ENCODE measurements at regions of chr12 and their contacts with region 1.

Region 1: DNA sequence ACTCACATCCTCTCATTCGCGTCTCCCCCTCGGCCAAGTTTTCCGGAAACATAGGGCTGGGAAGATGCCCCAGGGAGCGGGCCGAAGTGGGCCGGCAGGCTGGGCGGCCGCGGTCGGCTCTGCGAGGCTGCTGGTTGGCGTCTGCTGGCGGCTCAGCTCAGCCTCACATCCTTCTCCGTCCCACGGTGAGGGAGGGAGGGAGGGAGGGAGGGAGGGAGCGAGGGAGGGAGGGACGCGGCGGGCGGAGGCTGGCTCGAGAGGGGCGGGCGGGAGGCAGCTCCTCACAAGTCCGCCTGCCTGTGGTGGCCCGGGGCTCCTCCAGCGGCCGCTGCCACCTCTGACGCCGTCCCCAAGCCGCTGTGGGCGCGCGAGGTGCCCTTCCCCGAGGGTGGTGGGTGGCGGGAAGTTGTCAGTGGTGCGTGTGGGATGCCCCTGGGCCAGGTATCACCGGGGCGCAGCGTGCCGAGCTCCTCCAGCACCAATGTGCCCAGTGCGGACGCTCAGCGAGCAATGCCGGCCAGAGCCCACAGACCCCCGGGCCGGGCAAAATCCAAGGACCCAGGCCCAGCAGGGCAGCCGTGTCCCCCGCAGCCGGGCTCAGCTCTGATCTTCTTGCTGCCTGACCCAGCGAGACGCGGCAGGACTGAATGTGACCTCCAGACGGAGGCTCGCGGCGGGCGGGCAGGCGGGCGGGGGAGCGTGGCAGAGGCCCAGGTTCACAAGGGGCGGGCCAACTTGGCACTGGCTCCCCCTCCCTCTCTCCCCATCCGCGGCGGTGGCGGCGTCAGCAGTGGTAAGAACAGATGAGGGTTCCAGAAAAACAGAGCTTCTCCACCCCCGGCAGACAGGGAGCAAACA is 94.0 kb downstream of the RFLNA start:
- DNase-seq: peak; percentile 67 to 88
- H3K4me3 ChIP-seq: peak overlapping the region; percentile 98
- H3K27ac ChIP-seq: peak overlapping the region; percentile 96
- H3K4me1 ChIP-seq: peaks cover 67% of the 10 kb centered on the region
- H3K27me3 ChIP-seq: no peaks in the 10 kb centered on the region
- CTCF ChIP-seq: no peak; the same call in 1 of the 2 replicates

Region 2: GRCh38 chr12:124359671-124360581 is 29.0 kb before region 1 on chr12:
- CTCF ChIA-PET with region 1: no interaction called
- POLR2A ChIA-PET with region 1: no interaction called
- intact Hi-C with region 1: loop called (anchors 5 kb)
- DNase-seq: peak in 1 of 2 experiments; percentile 87
- H3K4me3 ChIP-seq: no peak overlapping the region
- H3K27ac ChIP-seq: no peak overlapping the region
- H3K4me1 ChIP-seq: no peaks in the 10 kb centered on the region
- H3K27me3 ChIP-seq: no peaks in the 10 kb centered on the region
- CTCF ChIP-seq: no peak

Region 3: DNA sequence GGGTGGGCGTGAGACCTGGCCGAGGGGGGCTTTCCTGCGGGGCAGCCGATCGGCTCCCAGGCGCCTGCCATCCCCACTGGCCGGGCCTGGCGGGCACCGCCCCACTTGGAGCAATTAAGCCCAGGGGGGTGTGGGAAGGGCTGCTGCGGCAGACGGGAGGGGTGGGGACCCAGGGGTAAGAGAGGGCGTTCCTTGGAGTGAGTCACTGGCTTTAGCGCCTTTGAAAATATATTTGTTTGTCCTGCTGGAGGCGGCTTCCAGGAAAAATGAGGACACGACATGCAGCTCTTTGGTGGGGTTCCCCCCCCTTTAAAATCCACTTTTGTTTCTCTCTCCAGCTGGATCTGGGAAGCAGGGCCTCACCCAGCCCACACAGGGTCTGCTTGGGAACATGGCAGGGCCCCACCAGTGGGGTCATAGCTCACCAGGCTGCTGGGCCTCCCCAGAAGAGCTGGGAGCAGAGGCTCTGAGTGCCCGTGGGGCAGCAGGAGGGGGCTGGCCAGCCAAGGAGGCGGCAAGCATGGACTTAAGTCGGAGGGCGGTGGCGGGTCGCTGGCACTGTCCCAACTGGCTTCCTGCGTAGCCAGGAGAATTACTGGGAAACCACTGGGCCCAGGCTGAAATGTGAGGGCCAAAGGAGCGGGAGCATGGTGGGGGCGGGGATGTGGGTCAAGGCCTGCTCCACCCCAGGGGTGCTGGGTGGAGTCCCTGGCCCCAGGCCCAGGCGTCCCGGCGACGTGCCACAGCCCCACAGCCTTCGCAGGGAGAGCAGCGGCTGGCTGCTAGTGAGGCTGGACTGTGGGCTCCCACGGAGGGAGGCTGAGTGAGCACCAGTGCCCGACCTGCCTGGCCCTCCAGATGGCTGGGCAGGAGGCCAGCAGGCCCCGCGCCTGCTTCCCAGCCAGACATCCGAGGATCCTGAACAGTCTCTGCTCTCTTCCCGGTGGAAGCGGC is 33.9 kb after region 1 on chr12:
- CTCF ChIA-PET with region 1: no interaction called
- POLR2A ChIA-PET with region 1: no interaction called
- intact Hi-C with region 1: loop called (anchors 1 kb)
- DNase-seq: peak; percentile 84 to 96
- H3K4me3 ChIP-seq: peak overlapping the region; percentile 49; the same call in 1 of the 2 replicates
- H3K27ac ChIP-seq: peak overlapping the region; percentile 91
- H3K4me1 ChIP-seq: peaks cover 32% of the 10 kb centered on the region
- H3K27me3 ChIP-seq: no peaks in the 10 kb centered on the region
- CTCF ChIP-seq: no peak

Region 4: GRCh38 chr12:124453419-124454351 is 64.8 kb after region 1 on chr12:
- CTCF ChIA-PET with region 1: interaction called, 5 read pairs
- POLR2A ChIA-PET with region 1: interaction called, 3 read pairs
- intact Hi-C with region 1: loop called (anchors 1 kb)
- DNase-seq: peak; percentile 96 to 97
- H3K4me3 ChIP-seq: peak overlapping the region; percentile 35; the same call in 1 of the 2 replicates
- H3K27ac ChIP-seq: peak overlapping the region; percentile 75
- H3K4me1 ChIP-seq: peaks cover 32% of the 10 kb centered on the region
- H3K27me3 ChIP-seq: no peaks in the 10 kb centered on the region
- CTCF ChIP-seq: no peak

Region 5: GRCh38 chr12:124518051-124518932 is 129.4 kb after region 1 on chr12:
- CTCF ChIA-PET with region 1: no interaction called
- POLR2A ChIA-PET with region 1: no interaction called
- intact Hi-C with region 1: no loop called
- DNase-seq: peak; percentile 95
- H3K4me3 ChIP-seq: peak overlapping the region; percentile 59
- H3K27ac ChIP-seq: peak overlapping the region; percentile 91
- H3K4me1 ChIP-seq: peaks cover 54% of the 10 kb centered on the region
- H3K27me3 ChIP-seq: no peaks in the 10 kb centered on the region
- CTCF ChIP-seq: no peak

Region 6: DNA sequence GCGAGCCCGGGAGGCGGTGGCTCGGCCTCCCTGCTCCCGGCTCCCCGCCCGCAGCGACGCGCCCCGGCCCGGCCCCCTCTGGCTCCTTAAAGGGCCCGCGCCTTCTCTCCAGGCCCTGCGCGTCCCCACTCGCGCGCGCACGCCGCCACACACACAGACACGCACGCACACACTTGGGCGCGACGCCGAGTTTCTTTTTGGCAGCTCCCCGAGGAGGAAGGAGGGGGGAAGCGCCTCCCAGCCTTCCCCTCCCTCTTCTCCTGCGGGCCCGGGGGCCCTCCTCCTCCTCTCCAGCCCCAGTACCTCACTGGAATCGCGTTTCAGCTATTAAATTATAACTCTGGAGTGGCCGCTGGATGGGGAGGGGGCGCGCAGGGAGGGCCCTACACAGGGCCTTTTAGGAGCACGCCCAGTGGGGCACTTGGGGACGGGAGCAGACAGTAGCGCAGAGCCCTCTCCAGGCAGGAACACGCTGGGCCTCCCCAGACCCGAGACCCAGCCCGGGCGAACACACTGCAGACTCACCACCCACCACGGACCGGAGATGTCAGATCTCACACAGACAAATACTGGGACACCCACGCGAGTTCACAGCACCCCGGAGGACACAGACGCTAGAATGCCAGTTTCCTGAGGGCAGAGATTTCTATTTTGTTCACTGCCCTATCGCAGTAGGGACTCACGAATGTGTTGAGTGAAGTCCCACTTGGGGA is 178.9 kb after region 1 on chr12:
- CTCF ChIA-PET with region 1: no interaction called
- POLR2A ChIA-PET with region 1: no interaction called
- intact Hi-C with region 1: loop called (anchors 1 kb)
- DNase-seq: peak in 1 of 2 experiments; percentile 75
- H3K4me3 ChIP-seq: peak overlapping the region; percentile 56
- H3K27ac ChIP-seq: no peak overlapping the region
- H3K4me1 ChIP-seq: peaks cover 10% of the 10 kb centered on the region
- H3K27me3 ChIP-seq: no peaks in the 10 kb centered on the region
- CTCF ChIP-seq: no peak

Region 7: DNA sequence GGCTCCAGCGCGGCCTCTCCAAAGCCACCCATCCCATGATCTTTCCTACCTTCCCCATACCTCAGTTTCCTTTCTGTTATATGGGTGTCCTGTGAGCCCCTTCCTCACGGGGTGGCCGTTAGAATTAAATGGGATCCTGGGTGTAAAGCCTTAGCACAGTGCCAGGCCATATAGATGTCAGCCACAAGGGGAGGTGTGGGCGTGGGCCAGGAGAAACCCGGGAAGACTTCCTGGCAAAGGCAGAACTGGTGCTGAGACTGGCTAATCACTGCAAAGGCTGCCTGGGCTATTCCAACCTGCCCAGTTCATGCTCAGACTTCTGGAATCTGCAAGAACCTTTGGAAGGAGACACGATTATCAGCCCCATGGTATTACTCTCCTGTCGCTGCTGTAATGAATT is 189.5 kb after region 1 on chr12:
- CTCF ChIA-PET with region 1: no interaction called
- POLR2A ChIA-PET with region 1: no interaction called
- intact Hi-C with region 1: no loop called
- DNase-seq: no peak
- H3K4me3 ChIP-seq: no peak overlapping the region
- H3K27ac ChIP-seq: no peak overlapping the region
- H3K4me1 ChIP-seq: no peaks in the 10 kb centered on the region; the same call in 1 of the 2 replicates
- H3K27me3 ChIP-seq: no peaks in the 10 kb centered on the region
- CTCF ChIP-seq: no peak

Region 8: GRCh38 chr12:124767066-124767821 is 378.3 kb after region 1 on chr12:
- CTCF ChIA-PET with region 1: no interaction called
- POLR2A ChIA-PET with region 1: no interaction called
- intact Hi-C with region 1: loop called (anchors 5 kb)
- DNase-seq: peak in 1 of 2 experiments; percentile 71
- H3K4me3 ChIP-seq: no peak overlapping the region
- H3K27ac ChIP-seq: no peak overlapping the region
- H3K4me1 ChIP-seq: peaks cover 25% of the 10 kb centered on the region
- H3K27me3 ChIP-seq: no peaks in the 10 kb centered on the region
- CTCF ChIP-seq: peak; percentile 99

Region 9: GRCh38 chr12:124786061-124786964 is 397.4 kb after region 1 on chr12:
- CTCF ChIA-PET with region 1: no interaction called
- POLR2A ChIA-PET with region 1: no interaction called
- intact Hi-C with region 1: no loop called
- DNase-seq: no peak
- H3K4me3 ChIP-seq: no peak overlapping the region
- H3K27ac ChIP-seq: no peak overlapping the region
- H3K4me1 ChIP-seq: no peaks in the 10 kb centered on the region
- H3K27me3 ChIP-seq: no peaks in the 10 kb centered on the region
- CTCF ChIP-seq: no peak